Mammary epithelial cell (primary cell): ENCODE measurements at regions of chr16 and their contacts with region 1.

Region 1: DNA sequence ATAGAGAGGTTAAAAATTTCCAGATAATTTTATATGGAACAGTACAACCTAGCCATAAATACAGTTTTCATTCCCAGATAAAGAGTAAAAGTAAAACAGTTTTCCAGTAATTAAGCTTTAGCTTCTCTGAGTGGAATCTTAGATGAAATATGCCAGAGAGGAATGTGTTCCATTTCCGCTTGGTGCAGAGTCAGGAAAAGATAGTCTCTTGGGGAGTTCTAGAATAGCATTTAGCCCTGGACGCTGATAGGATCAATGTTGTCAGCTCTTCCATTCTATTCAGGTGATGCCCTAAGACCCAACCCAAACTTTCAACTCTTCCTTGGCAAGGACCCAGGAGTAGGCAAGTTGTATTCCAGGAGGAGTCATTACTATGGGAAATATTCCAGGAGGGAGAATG is 30.9 kb upstream of the ABCA3 start:
- DNase-seq: no peak
- H3K4me3 ChIP-seq: no peak overlapping the region
- H3K27ac ChIP-seq: no peak overlapping the region
- H3K4me1 ChIP-seq: peaks cover 12% of the 10 kb centered on the region
- H3K27me3 ChIP-seq: no peaks in the 10 kb centered on the region
- CTCF ChIP-seq: no peak

Region 2: GRCh38 chr16:2415085-2415484 is 43.7 kb after region 1 on chr16:
- CTCF ChIA-PET with region 1: no interaction called
- dilution Hi-C with region 1: loop called (anchors 5 kb)
- in situ Hi-C with region 1: no loop called
- intact Hi-C with region 1: loop called (anchors 5 kb)
- DNase-seq: no peak
- H3K4me3 ChIP-seq: no peak overlapping the region
- H3K27ac ChIP-seq: no peak overlapping the region
- H3K4me1 ChIP-seq: no peaks in the 10 kb centered on the region
- H3K27me3 ChIP-seq: no peaks in the 10 kb centered on the region
- CTCF ChIP-seq: no peak

Region 3: GRCh38 chr16:2474877-2475412 is 103.5 kb after region 1 on chr16 and contains the start of gene TBC1D24:
- CTCF ChIA-PET with region 1: no interaction called
- dilution Hi-C with region 1: no loop called
- in situ Hi-C with region 1: no loop called
- intact Hi-C with region 1: no loop called
- DNase-seq: peak; percentile 77
- H3K4me3 ChIP-seq: peak within 1 kb of the TSS; percentile 60 to 89 (median 84)
- H3K27ac ChIP-seq: peak within 1 kb of the TSS; percentile 22
- H3K4me1 ChIP-seq: peaks cover 32% of the 10 kb centered on the region
- H3K27me3 ChIP-seq: no peaks in the 10 kb centered on the region
- CTCF ChIP-seq: no peak
- total RNA-seq, gene TBC1D24: 11.4 to 12.3 TPM

Region 4: DNA sequence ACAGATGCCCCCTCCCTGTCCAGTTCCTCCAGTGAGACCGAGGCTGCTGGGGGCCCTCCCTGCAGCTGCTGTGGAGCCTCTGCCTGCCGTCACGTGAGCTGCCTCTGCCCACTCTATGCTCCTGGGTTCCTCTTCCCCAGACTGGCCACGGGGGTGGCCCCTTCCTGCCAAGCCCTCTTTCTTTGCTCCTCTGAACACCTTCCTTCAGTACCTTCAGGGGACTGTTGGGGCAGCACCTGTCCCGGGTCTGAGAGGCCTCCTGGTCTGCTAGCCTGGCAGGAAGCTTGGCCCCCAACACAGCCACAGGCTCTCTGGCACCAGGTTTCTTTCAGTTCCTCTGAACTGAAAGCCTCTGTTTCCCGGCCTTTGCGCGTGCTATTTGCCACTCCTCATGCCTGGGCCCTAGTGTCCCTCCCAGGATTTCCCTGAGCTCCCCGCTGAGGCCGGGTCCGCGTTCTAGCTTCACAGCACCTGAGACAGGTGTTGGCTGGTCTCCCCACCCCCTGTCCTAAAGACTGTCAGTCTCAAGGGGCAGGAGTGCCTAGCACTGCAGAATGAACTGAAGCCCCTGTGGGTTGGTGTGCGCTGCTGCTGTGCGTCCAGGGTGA is 135.7 kb after region 1 on chr16:
- CTCF ChIA-PET with region 1: no interaction called
- dilution Hi-C with region 1: loop called (anchors 5 kb)
- in situ Hi-C with region 1: no loop called
- intact Hi-C with region 1: no loop called
- DNase-seq: no peak
- H3K4me3 ChIP-seq: no peak overlapping the region
- H3K27ac ChIP-seq: no peak overlapping the region
- H3K4me1 ChIP-seq: no peaks in the 10 kb centered on the region
- H3K27me3 ChIP-seq: no peaks in the 10 kb centered on the region
- CTCF ChIP-seq: no peak

Region 5: DNA sequence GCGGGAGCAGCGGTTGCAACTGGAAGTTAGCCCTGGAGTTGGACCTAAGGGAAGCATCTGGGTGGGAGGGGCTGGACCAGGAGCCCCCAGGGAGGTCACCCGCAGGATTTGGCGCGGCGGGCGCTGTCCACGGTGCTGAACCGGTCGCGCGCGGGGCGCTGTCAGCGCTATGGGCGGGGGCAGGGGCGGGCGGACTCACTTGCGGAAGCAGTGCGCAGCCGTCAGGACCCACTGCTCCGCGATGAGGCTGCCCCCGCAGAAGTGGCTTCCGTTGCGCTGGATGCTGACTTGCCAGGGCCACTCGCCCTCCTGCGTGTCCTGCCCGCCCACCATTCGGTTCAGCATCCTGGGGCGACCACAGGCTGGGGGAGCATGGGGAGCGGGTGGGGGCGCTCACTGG is 344.1 kb after region 1 on chr16:
- CTCF ChIA-PET with region 1: no interaction called
- dilution Hi-C with region 1: no loop called
- in situ Hi-C with region 1: no loop called
- intact Hi-C with region 1: no loop called
- DNase-seq: peak; percentile 23
- H3K4me3 ChIP-seq: peak overlapping the region in 1 of 3 experiments; percentile 27
- H3K27ac ChIP-seq: no peak overlapping the region
- H3K4me1 ChIP-seq: peaks cover 14% of the 10 kb centered on the region
- H3K27me3 ChIP-seq: no peaks in the 10 kb centered on the region
- CTCF ChIP-seq: no peak